ENCODE measurements at regions of chr1 and their contacts with region 1.

Region 1: GRCh38 chr1:154819628-154820590 is 50.2 kb downstream of the KCNN3 start:
- DNase-seq: no peak

Region 2: GRCh38 chr1:154772606-154773506 is 47.1 kb before region 1 on chr1:
- in situ Hi-C with region 1: loop called (anchors 10 kb)
- DNase-seq: no peak